ENCODE measurements at regions of chr20 and their contacts with region 1.

Region 1: GRCh38 chr20:12318043-12318442 is 400.4 kb downstream of the BTBD3 start:
- DNase-seq: no peak
- ATAC-seq: no peak
- H3K4me3 ChIP-seq: no peak overlapping the region
- H3K4me3 Mint-ChIP-seq: no peak overlapping the region
- H3K27ac ChIP-seq: no peak overlapping the region
- H3K27ac Mint-ChIP-seq: no peak overlapping the region
- H3K4me1 ChIP-seq: no peaks in the 10 kb centered on the region
- H3K4me1 Mint-ChIP-seq: no peaks in the 10 kb centered on the region
- H3K27me3 ChIP-seq: no peaks in the 10 kb centered on the region
- H3K27me3 Mint-ChIP-seq: no peaks in the 10 kb centered on the region
- CTCF ChIP-seq: no peak

Region 2: DNA sequence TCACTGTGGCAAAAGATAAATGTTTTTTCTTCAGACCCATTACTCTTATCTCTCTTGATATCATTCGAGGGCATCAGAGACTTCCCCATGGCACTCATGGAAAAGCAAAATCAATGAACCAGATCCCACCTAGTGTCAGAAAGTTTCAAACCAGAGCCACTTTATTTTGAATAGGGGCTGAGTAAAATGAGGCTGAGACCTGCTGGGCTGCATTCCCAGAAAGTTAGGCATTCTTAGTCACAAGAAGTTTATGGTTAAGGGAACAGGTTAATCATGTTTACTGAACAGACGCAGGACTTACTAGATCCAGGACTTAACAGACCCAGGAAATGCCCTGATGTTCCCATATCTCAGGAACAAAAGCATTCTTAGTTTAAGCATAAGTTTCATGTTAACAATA is 30.5 kb before region 1 on chr20:
- CTCF ChIA-PET with region 1: no interaction called
- POLR2A ChIA-PET with region 1: no interaction called
- intact Hi-C with region 1: loop called in 1 of 2 experiments (anchors 1 kb)
- DNase-seq: no peak
- ATAC-seq: no peak
- H3K4me3 ChIP-seq: no peak overlapping the region
- H3K4me3 Mint-ChIP-seq: no peak overlapping the region
- H3K27ac ChIP-seq: no peak overlapping the region
- H3K27ac Mint-ChIP-seq: no peak overlapping the region
- H3K4me1 ChIP-seq: no peaks in the 10 kb centered on the region
- H3K4me1 Mint-ChIP-seq: no peaks in the 10 kb centered on the region
- H3K27me3 ChIP-seq: no peaks in the 10 kb centered on the region
- H3K27me3 Mint-ChIP-seq: no peaks in the 10 kb centered on the region
- CTCF ChIP-seq: no peak

Region 3: DNA sequence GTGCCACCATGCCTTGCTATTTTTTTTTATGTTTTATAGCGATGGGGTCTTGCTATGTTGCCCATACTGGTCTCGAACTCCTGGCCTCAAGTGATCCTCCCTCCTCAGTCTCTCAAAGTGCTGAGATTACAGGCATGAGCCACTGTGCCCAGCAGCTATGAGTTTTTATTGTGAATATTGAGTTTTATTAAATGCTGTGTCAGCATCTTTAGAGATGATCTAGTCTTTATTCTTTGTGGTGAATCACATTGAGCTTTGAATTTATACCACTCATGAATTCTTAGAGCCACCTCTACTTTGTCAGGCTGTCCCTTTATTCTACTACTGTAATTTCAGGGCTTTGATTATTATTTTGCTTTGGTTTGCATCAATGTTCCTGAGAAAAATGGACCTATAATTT is 27.9 kb after region 1 on chr20:
- CTCF ChIA-PET with region 1: no interaction called
- POLR2A ChIA-PET with region 1: no interaction called
- intact Hi-C with region 1: no loop called
- DNase-seq: no peak
- ATAC-seq: no peak
- H3K4me3 ChIP-seq: no peak overlapping the region
- H3K4me3 Mint-ChIP-seq: no peak overlapping the region
- H3K27ac ChIP-seq: no peak overlapping the region
- H3K27ac Mint-ChIP-seq: no peak overlapping the region
- H3K4me1 ChIP-seq: no peaks in the 10 kb centered on the region
- H3K4me1 Mint-ChIP-seq: no peaks in the 10 kb centered on the region
- H3K27me3 ChIP-seq: no peaks in the 10 kb centered on the region
- H3K27me3 Mint-ChIP-seq: no peaks in the 10 kb centered on the region
- CTCF ChIP-seq: no peak

Measured in CD8-positive, alpha-beta T cell (primary cell).